CD8-positive, alpha-beta T cell (primary cell): ENCODE measurements at regions of chr7 and their contacts with region 1.

Region 1: GRCh38 chr7:151017953-151018420 is 6.3 kb downstream of the ATG9B start:
- DNase-seq: peak; percentile 70 to 90 (median 83)
- ATAC-seq: peak; percentile 60
- H3K4me3 ChIP-seq: peak overlapping the region; percentile 40 to 54
- H3K4me3 Mint-ChIP-seq: peak overlapping the region; percentile 83
- H3K27ac ChIP-seq: peak overlapping the region in 1 of 2 experiments; percentile 27
- H3K27ac Mint-ChIP-seq: peak overlapping the region; percentile 39
- H3K4me1 ChIP-seq: peaks cover 61% of the 10 kb centered on the region
- H3K4me1 Mint-ChIP-seq: peaks cover 57% of the 10 kb centered on the region
- H3K27me3 ChIP-seq: peaks cover 0 to 16% of the 10 kb centered on the region in 2 experiments
- H3K27me3 Mint-ChIP-seq: peaks cover 7% of the 10 kb centered on the region
- CTCF ChIP-seq: peak; percentile 99

Region 2: GRCh38 chr7:150974468-150975391 is 43.3 kb before region 1 on chr7:
- CTCF ChIA-PET with region 1: interaction called, 18 read pairs
- POLR2A ChIA-PET with region 1: interaction called, 8 read pairs
- intact Hi-C with region 1: loop called in 1 of 2 experiments (anchors 1 kb)
- DNase-seq: peak; percentile 70 to 90 (median 80)
- ATAC-seq: peak; percentile 77
- H3K4me3 ChIP-seq: peak overlapping the region; percentile 63 to 69
- H3K4me3 Mint-ChIP-seq: peak overlapping the region; percentile 84
- H3K27ac ChIP-seq: peak overlapping the region; percentile 24 to 82
- H3K27ac Mint-ChIP-seq: peak overlapping the region; percentile 89
- H3K4me1 ChIP-seq: peaks cover 43% of the 10 kb centered on the region
- H3K4me1 Mint-ChIP-seq: peaks cover 38% of the 10 kb centered on the region
- H3K27me3 ChIP-seq: peaks cover 17 to 20% of the 10 kb centered on the region in 2 experiments
- H3K27me3 Mint-ChIP-seq: peaks cover 18% of the 10 kb centered on the region
- CTCF ChIP-seq: peak; percentile 24

Region 3: DNA sequence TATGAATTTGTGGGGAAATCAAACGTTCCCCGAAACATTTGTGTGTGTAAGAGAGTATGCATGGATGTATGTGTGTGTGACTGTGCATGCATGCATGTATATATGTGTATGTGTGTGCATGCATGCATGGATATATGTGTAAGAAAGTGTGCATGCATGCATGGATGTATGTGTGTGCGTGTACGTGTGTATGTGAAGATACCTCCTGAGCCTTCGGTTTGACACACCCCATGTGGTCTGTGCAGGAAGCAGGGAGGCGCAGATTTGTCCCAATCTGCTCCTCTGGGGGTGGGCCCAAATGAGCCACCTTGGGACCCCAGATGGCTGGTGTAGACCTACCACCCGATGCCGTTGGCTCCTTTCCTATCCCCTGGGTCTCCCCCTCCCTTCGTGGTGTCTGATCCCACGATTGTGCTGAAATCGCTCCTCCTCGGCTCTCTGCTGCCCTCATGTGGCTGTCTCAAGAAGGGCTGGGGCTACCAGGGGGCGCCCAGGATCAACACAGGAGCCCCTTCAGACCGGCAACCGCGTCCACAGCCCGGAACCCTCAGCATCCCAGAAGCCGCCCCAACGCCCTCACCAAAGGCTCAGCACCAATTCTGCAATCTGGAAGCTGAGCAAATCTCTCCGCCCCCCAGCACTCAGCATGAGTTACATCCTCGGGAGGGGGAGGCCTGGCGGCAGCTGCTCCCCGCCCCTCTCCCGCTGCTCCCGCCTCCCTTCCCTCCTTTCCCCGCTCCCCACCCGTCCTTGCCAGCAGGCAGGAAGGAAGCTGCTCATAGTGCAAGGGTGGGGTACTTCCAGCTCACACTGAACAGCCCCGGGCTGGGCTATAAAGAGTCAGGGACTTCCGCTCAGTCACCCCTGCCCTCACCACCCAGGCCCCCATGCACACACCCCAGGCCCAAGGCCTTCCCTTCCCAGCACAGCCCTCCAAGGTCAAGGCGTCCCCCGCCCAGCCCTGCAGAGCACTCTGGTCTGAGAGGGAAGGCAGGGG is 29.5 kb before region 1 on chr7:
- CTCF ChIA-PET with region 1: interaction called, 54 read pairs
- POLR2A ChIA-PET with region 1: interaction called, 8 read pairs
- intact Hi-C with region 1: loop called (anchors 1 to 2 kb)
- DNase-seq: peak; percentile 45 to 80 (median 72)
- ATAC-seq: peak; percentile 79
- H3K4me3 ChIP-seq: no peak overlapping the region
- H3K4me3 Mint-ChIP-seq: peak overlapping the region; percentile 37
- H3K27ac ChIP-seq: no peak overlapping the region
- H3K27ac Mint-ChIP-seq: no peak overlapping the region
- H3K4me1 ChIP-seq: peaks cover 22% of the 10 kb centered on the region
- H3K4me1 Mint-ChIP-seq: peaks cover 18% of the 10 kb centered on the region
- H3K27me3 ChIP-seq: peaks cover 0 to 2% of the 10 kb centered on the region in 2 experiments
- H3K27me3 Mint-ChIP-seq: peaks cover 6% of the 10 kb centered on the region
- CTCF ChIP-seq: peak; percentile 79

Region 4: GRCh38 chr7:151028131-151028947 is 10.4 kb after region 1 on chr7 and contains the start of gene ABCB8:
- CTCF ChIA-PET with region 1: interaction called, 29 read pairs
- POLR2A ChIA-PET with region 1: interaction called, 27 read pairs
- intact Hi-C with region 1: loop called (anchors 1 kb)
- DNase-seq: peak; percentile 93 to 99 (median 98)
- ATAC-seq: peak; percentile 92
- H3K4me3 ChIP-seq: peak within 1 kb of the TSS; percentile 67 to 75
- H3K4me3 Mint-ChIP-seq: peak within 1 kb of the TSS; percentile 96
- H3K27ac ChIP-seq: peak within 1 kb of the TSS; percentile 94 to 96
- H3K27ac Mint-ChIP-seq: peak within 1 kb of the TSS; percentile 99
- H3K4me1 ChIP-seq: peaks cover 12% of the 10 kb centered on the region
- H3K4me1 Mint-ChIP-seq: peaks cover 24% of the 10 kb centered on the region
- H3K27me3 ChIP-seq: no peaks in the 10 kb centered on the region
- H3K27me3 Mint-ChIP-seq: no peaks in the 10 kb centered on the region
- CTCF ChIP-seq: peak; percentile 35
- total RNA-seq, gene ABCB8: 43.6 to 49.3 TPM

Region 5: GRCh38 chr7:151085691-151086620 is 68.0 kb after region 1 on chr7 and contains the start of gene AGAP3:
- CTCF ChIA-PET with region 1: interaction called, 11 read pairs
- POLR2A ChIA-PET with region 1: interaction called, 7 read pairs
- intact Hi-C with region 1: loop called in 1 of 2 experiments (anchors 1 kb)
- DNase-seq: peak in 7 of 9 experiments; percentile 30 to 71 (median 57)
- ATAC-seq: no peak
- H3K4me3 ChIP-seq: peak within 1 kb of the TSS; percentile 65 to 80
- H3K4me3 Mint-ChIP-seq: peak within 1 kb of the TSS; percentile 88
- H3K27ac ChIP-seq: peak within 1 kb of the TSS in 1 of 2 experiments; percentile 51
- H3K27ac Mint-ChIP-seq: peak within 1 kb of the TSS; percentile 85
- H3K4me1 ChIP-seq: peaks cover 58% of the 10 kb centered on the region
- H3K4me1 Mint-ChIP-seq: peaks cover 44% of the 10 kb centered on the region
- H3K27me3 ChIP-seq: no peaks in the 10 kb centered on the region
- H3K27me3 Mint-ChIP-seq: peaks cover 21% of the 10 kb centered on the region
- CTCF ChIP-seq: no peak
- total RNA-seq, gene AGAP3: 35.0 to 36.6 TPM

Region 6: GRCh38 chr7:151232091-151232916 is 214.3 kb after region 1 on chr7 and contains the start of gene CHPF2:
- CTCF ChIA-PET with region 1: no interaction called
- POLR2A ChIA-PET with region 1: no interaction called
- intact Hi-C with region 1: no loop called
- DNase-seq: peak; percentile 71 to 94 (median 92)
- ATAC-seq: peak; percentile 74
- H3K4me3 ChIP-seq: peak within 1 kb of the TSS; percentile 76 to 96
- H3K4me3 Mint-ChIP-seq: peak within 1 kb of the TSS; percentile 100
- H3K27ac ChIP-seq: peak within 1 kb of the TSS; percentile 54 to 59
- H3K27ac Mint-ChIP-seq: peak within 1 kb of the TSS; percentile 98
- H3K4me1 ChIP-seq: peaks cover 22% of the 10 kb centered on the region
- H3K4me1 Mint-ChIP-seq: peaks cover 35% of the 10 kb centered on the region
- H3K27me3 ChIP-seq: no peaks in the 10 kb centered on the region
- H3K27me3 Mint-ChIP-seq: no peaks in the 10 kb centered on the region
- CTCF ChIP-seq: no peak
- total RNA-seq, gene CHPF2: 24.7 to 24.9 TPM

Region 7: DNA sequence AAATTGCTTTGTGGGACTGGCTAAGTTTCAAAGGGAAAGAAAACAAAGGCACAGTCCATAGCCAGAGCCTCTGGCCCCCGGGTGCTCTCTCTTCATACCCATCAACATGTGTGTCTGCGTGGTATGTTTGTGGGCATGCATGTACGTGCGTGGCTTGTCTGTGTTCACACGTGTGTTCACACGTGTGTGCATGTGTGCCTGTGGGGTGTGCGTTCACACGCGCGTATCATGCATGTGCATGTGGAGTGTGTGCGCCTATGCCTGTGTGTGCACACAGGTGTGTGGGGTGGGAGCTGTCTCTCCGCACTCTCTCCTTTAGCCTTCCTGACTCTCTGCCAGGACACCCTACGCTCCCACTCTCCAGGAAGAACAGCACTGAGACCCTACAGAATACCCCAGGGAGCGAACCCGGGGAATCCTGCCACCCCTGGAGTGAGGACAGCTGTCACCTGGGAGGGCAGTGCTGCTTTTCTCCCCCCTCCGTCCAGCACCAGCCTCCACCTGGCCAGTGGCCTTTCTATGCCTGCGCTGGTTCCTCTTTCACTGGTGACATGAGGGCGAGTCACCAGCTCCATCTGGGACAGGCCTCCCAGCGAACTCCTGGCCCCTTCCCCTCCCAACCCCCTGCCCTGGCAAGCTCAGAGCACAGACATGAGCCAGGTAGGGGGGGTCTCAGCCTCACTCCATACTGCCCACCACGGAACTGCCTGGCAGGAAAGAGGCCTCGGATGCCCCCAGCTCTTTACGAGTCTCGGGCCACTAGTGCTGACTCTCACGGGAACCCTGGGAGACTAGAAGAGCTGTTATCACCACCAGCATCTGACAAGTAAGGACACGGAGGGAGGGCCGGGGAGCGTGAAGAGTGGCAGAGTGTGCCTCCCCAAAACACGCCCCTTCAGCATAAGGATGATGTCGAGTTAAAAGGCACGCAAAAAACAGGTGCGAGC is 375.3 kb after region 1 on chr7:
- CTCF ChIA-PET with region 1: no interaction called
- POLR2A ChIA-PET with region 1: no interaction called
- intact Hi-C with region 1: no loop called
- DNase-seq: no peak
- ATAC-seq: no peak
- H3K4me3 ChIP-seq: no peak overlapping the region
- H3K4me3 Mint-ChIP-seq: no peak overlapping the region
- H3K27ac ChIP-seq: no peak overlapping the region
- H3K27ac Mint-ChIP-seq: no peak overlapping the region
- H3K4me1 ChIP-seq: no peaks in the 10 kb centered on the region
- H3K4me1 Mint-ChIP-seq: peaks cover 10% of the 10 kb centered on the region
- H3K27me3 ChIP-seq: no peaks in the 10 kb centered on the region
- H3K27me3 Mint-ChIP-seq: peaks cover 4% of the 10 kb centered on the region
- CTCF ChIP-seq: no peak